ENCODE measurements at regions of chr1 and their contacts with region 1.

Region 1: DNA sequence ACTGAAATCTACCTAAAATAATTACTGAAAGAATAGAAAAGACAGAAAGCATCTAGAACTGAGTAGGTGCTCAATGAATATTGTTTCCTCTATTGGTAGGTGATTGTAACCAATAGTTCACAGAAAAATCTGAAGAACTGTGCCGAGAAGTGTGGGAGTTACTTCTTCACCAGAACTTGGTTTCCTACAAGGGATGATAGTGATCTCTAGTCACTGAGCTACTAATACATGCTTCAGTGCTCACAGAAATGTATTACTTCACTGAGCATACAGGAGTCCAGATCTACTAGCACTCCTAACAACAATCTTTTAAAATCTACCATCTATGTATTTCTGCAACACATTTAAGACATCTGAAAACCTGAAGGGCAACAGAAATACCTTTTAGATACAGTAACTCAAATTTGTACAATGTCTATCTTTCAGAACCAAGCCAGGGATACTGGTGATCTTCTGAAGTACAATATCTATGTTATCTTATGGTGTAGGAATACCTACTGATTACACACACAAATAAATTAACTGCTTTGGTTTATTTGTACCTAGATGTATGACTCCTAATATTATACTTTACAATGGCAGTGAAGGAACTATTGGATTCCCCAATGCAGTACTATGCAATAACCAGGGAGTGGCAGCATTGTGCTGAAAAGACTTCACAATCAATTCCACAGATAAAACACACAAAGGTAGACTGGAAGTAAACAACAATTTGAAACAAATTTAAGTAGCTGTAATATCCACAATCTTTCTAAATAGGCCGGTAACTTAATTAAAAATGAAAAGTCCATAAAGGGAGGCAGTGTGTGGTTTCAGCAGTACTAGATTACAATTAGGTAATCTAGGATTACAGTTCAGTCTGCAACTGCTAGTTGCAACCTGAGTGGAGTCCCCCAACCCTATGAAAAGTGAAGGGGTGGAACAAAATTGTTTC is 243.0 kb downstream of the SLC45A1 start:
- DNase-seq: peak; percentile 52 to 69 (median 55)
- ATAC-seq: peak; percentile 80
- H3K4me3 ChIP-seq: no peak overlapping the region
- H3K27ac ChIP-seq: no peak overlapping the region
- H3K4me1 ChIP-seq: peaks cover 0 to 19% of the 10 kb centered on the region in 2 experiments; a peak in 4 of 5 replicates
- H3K27me3 ChIP-seq: no peaks in the 10 kb centered on the region
- CTCF ChIP-seq: peak; percentile 72 to 98 (median 88)
- EP300 ChIP-seq: 0 out of 2 replicates have a peak, but pooled peaks have one; percentile 2
- POLR2A ChIP-seq: no peak
- RAD21 ChIP-seq: peak; percentile 96 to 99

Region 2: GRCh38 chr1:8671306-8671917 is 110.5 kb after region 1 on chr1:
- CTCF ChIA-PET with region 1: interaction called, 31 read pairs
- POLR2A ChIA-PET with region 1: no interaction called
- in situ Hi-C with region 1: loop called (anchors 5 kb)
- intact Hi-C with region 1: loop called (anchors 1 kb)
- DNase-seq: peak; percentile 69 to 76 (median 74)
- ATAC-seq: peak; percentile 86
- H3K4me3 ChIP-seq: no peak overlapping the region
- H3K27ac ChIP-seq: no peak overlapping the region
- H3K4me1 ChIP-seq: peaks cover 0 to 27% of the 10 kb centered on the region in 2 experiments; a peak in 2 of 5 replicates
- H3K27me3 ChIP-seq: no peaks in the 10 kb centered on the region
- CTCF ChIP-seq: peak; percentile 81 to 93 (median 89)
- EP300 ChIP-seq: no peak
- POLR2A ChIP-seq: no peak
- RAD21 ChIP-seq: peak; percentile 81 to 95

Region 3: GRCh38 chr1:8727809-8728213 is 166.9 kb after region 1 on chr1:
- CTCF ChIA-PET with region 1: interaction called, 53 read pairs
- POLR2A ChIA-PET with region 1: interaction called, 5 read pairs
- in situ Hi-C with region 1: loop called (anchors 5 kb)
- intact Hi-C with region 1: loop called (anchors 1 kb)
- DNase-seq: no peak
- ATAC-seq: no peak
- H3K4me3 ChIP-seq: no peak overlapping the region
- H3K27ac ChIP-seq: no peak overlapping the region
- H3K4me1 ChIP-seq: peaks cover 4 to 5% of the 10 kb centered on the region in 2 experiments; a peak in 3 of 5 replicates
- H3K27me3 ChIP-seq: no peaks in the 10 kb centered on the region
- CTCF ChIP-seq: no peak
- EP300 ChIP-seq: no peak
- POLR2A ChIP-seq: no peak
- RAD21 ChIP-seq: no peak

Measured in K562 (cell line).